ENCODE measurements at regions of chr11 and their contacts with region 1.

Region 1: DNA sequence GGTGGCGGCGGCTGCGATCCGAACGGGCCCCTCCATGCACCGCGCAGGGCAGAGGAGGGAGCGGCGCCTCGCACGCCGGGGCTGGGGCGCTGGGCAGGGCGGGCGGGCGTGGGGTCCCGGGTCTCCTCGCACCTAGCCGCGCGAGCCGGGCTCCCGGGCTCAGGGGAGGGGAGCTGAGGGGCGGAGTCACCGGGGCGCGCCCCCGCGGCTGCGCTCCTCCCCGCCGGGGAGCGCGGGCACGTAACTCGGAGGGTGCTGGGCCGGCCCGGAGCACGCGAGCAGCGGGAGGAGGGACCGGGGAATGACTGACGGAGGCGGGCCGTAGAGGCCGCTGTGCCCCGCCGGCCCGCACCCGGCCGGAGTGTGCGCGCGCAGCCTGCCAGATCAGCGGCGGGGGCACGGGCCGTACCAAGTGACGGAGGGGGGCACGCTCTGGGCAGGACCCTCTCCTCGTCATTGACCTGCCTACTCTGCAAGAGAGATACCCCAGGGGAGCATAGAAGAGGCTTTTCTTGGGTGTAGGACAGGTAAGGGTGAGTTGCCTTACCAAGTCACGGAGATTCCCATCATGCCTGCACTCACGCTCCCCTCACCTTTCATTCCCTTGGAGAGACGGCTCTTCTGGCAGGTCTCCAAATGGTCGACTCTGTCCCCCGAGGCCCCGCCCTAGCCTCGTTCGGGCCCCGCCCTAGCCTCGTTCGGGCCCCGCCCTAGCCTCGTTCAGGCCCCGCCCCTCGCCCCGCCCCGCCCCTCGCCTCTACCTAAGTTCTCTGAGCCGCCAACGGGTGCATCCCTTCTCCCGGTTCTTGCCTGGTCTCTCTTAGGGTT is at the start of gene CDON:
- DNase-seq: peak; percentile 43 to 93
- H3K4me3 ChIP-seq: peak within 1 kb of the TSS; percentile 78 to 89
- H3K27ac ChIP-seq: peak within 1 kb of the TSS; percentile 64 to 68
- H3K4me1 ChIP-seq: peaks cover 0 to 8% of the 10 kb centered on the region in 2 donors
- H3K27me3 ChIP-seq: no peaks in the 10 kb centered on the region
- CTCF ChIP-seq: peak in 1 of 3 experiments; percentile 12
- total RNA-seq, gene CDON: 33.0 TPM

Region 2: GRCh38 chr11:125902927-125903710 is 159.8 kb before region 1 on chr11 and contains the start of gene PUS3:
- intact Hi-C with region 1: loop called (anchors 1 kb)
- DNase-seq: peak; percentile 62 to 95
- H3K4me3 ChIP-seq: peak within 1 kb of the TSS; percentile 61 to 63
- H3K27ac ChIP-seq: peak within 1 kb of the TSS; percentile 66 to 83
- H3K4me1 ChIP-seq: peaks cover 2 to 8% of the 10 kb centered on the region in 2 donors
- H3K27me3 ChIP-seq: peaks cover 5% of the 10 kb centered on the region
- CTCF ChIP-seq: no peak
- total RNA-seq, gene PUS3: 31.3 TPM

Region 3: GRCh38 chr11:126452241-126453101 is 389.6 kb after region 1 on chr11:
- intact Hi-C with region 1: no loop called
- DNase-seq: no peak
- H3K4me3 ChIP-seq: no peak overlapping the region
- H3K27ac ChIP-seq: no peak overlapping the region
- H3K4me1 ChIP-seq: no peaks in the 10 kb centered on the region
- H3K27me3 ChIP-seq: no peaks in the 10 kb centered on the region
- CTCF ChIP-seq: no peak

Measured in ascending aorta (tissue), 2 donors.